ENCODE measurements at regions of chr5 and their contacts with region 1.

Region 1: GRCh38 chr5:41856644-41857491 is 13.4 kb downstream of the OXCT1 start:
- DNase-seq: peak; percentile 58 to 67
- H3K4me3 ChIP-seq: no peak overlapping the region
- H3K4me1 ChIP-seq: no peaks in the 10 kb centered on the region
- H3K27me3 ChIP-seq: no peaks in the 10 kb centered on the region

Region 2: DNA sequence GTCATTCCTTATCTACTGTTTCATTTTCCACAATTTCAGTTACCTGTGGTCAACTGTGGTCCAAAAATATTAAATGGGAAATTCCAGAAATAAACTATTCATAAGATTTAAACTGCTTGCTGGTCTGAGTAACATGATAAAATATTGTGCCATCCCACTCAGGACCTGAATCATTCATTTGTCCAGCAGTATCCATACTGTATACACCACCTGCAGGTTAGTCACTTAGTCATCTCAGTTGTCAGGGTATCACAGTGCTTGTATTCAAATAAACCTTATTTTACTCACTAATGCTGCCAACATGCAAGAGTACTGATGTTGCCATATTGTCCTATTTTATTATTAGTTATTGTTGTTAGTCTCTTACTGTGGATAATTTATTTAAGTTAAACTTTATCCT is 208.0 kb after region 1 on chr5:
- in situ Hi-C with region 1: loop called (anchors 10 kb)
- DNase-seq: no peak
- H3K4me3 ChIP-seq: no peak overlapping the region
- H3K4me1 ChIP-seq: no peaks in the 10 kb centered on the region
- H3K27me3 ChIP-seq: no peaks in the 10 kb centered on the region